Cardiac septum (tissue), 1 donor: ENCODE measurements at regions of chr2 and their contacts with region 1.

Region 1: DNA sequence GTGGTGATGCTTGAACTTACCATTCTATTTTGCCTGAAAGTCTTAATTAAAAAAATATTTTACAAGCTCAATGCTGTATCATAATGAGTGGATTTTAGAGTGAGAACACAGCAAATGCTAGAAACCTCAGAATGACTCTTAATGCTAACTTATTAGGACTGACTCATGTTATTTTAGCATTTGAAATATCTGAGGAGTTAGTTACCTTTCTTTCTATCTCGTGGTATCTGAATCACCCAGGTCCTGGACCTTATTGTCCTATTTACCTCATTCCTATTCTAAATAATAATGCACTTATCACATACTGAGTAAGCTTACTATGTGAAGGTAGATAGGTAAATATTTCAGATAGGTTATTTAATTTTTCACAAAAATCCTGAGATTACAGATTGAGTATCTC is 70.7 kb downstream of the SOS1 start:
- DNase-seq: no peak

Region 2: DNA sequence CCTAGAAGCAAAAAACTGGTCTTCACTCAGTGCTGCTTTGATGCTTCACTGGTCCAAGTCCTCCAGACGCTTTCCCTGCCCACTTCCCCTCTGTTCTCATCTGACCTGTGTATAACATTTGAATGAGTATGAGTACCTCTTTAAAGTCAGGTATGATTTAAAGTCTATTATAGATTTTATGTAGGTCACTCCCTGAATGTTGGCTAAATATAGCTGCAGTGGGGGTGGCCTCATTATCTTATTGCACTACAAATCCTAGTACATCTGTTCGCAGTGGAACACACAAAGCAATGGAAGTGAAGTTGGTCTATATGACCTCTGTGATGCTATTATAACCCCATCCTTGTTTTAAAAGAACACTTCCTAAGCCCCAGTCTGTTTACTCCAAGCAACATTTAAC is 127.2 kb before region 1 on chr2:
- intact Hi-C with region 1: no loop called
- DNase-seq: no peak

Region 3: DNA sequence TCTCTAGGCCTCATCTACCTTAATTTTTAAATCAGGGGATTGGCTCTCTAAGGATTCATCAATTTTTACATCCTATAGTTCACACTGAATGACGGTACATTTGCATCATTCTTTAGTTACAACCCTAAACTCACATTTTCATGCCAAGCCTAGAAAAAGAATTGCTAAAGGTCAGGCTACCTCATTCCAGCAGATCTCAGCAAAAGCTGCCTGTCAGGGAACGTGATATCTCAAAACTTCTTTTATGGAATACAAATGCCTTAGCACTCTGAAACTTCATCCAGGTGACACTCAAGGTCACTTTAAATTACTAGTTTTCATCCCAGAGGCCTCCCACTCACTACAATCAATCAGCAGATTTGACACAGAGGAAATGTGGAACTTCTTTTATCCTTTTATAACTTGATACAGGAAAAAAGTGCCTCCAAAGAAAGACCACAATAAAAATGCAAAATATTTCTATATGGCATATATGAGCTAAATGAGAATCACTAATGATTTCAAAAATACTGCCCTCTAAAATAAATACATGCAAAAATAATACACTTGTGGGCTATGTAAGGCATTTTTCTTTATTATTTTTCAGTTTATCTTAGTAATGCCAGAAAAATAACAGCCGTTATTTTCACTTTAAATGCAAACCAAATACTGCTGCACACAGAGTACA is 69.0 kb before region 1 on chr2:
- intact Hi-C with region 1: loop called (anchors 2 kb)
- DNase-seq: no peak